Activated T-helper 1 cell treated with anti-CD3 and anti-CD28 coated beads, Interleukin-12 subunit alpha, Interleukin-12 subunit beta, Interleukin-2, Interleukin-4 antibody, amounts not matched to agents 30 ng/mL and 10 ng/mL and 1 ng/mL, durations not matched to agents 14 hours and 24 hours and 36 hours (primary cell): ENCODE measurements at regions of chr22 and their contacts with region 1.

Region 1: GRCh38 chr22:29766632-29767170 is at the start of gene ZMAT5:
- DNase-seq: peak; percentile 90
- H3K4me3 Mint-ChIP-seq: peak within 1 kb of the TSS; percentile 98
- H3K27ac Mint-ChIP-seq: peak within 1 kb of the TSS; percentile 88
- H3K4me1 Mint-ChIP-seq: peaks cover 40% of the 10 kb centered on the region
- H3K27me3 Mint-ChIP-seq: no peaks in the 10 kb centered on the region
- total RNA-seq, gene ZMAT5: 28.4 and 28.5 TPM in 2 replicates

Region 2: GRCh38 chr22:29553351-29554224 is 213.1 kb before region 1 on chr22 and contains the start of gene THOC5:
- intact Hi-C with region 1: loop called (anchors 1 kb)
- DNase-seq: peak; percentile 86
- H3K4me3 Mint-ChIP-seq: peak within 1 kb of the TSS; percentile 93
- H3K27ac Mint-ChIP-seq: peak within 1 kb of the TSS; percentile 94
- H3K4me1 Mint-ChIP-seq: peaks cover 23% of the 10 kb centered on the region
- H3K27me3 Mint-ChIP-seq: no peaks in the 10 kb centered on the region
- total RNA-seq, gene THOC5: 69.0 and 76.2 TPM in 2 replicates

Region 3: GRCh38 chr22:29625090-29625825 is 141.4 kb before region 1 on chr22:
- intact Hi-C with region 1: loop called (anchors 5 kb)
- DNase-seq: peak; percentile 14
- H3K4me3 Mint-ChIP-seq: no peak overlapping the region
- H3K27ac Mint-ChIP-seq: no peak overlapping the region
- H3K4me1 Mint-ChIP-seq: peaks cover 64% of the 10 kb centered on the region
- H3K27me3 Mint-ChIP-seq: no peaks in the 10 kb centered on the region

Region 4: DNA sequence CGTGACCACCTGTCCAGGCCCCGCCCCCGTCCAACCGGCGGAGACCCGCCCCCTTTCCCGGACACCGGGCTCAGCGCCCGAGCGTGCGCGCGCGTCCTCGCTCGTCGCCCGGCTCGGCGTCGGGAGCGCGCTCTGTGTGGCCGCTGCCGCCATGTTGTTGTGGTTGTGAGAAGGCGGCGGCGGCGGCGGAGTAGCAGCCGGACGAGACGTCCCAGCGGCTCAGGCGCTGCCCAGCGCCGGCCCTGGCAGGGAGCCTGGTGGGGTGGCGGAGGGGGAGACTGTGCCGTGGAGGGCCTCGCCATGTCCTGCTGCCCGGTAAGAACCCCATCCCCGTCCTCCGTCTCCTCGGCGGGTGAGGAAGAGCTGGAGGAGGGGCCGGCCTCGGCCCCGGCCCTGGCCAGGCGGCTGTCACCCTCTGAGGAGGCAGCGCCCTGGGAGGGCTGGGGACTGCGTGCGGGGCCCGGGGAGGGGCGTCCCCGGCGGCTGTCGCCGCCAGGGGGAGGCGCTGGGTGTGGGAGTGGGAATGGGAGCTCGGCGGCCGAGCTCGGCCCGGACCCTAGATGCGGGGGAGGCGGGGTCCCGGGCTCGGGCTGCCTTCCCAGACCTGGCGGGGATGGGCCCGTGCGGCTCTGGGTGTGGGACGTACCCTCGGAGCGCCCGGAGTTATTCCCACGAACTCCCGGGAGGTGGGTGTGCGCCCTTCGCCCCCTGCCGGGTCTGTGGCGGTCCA is 116.5 kb after region 1 on chr22 and contains the start of gene MTMR3:
- intact Hi-C with region 1: loop called (anchors 2 kb)
- DNase-seq: peak; percentile 94
- H3K4me3 Mint-ChIP-seq: peak within 1 kb of the TSS; percentile 82
- H3K27ac Mint-ChIP-seq: peak within 1 kb of the TSS; percentile 48
- H3K4me1 Mint-ChIP-seq: peaks cover 7% of the 10 kb centered on the region
- H3K27me3 Mint-ChIP-seq: peaks cover 5% of the 10 kb centered on the region
- total RNA-seq, gene MTMR3: 20.6 and 27.8 TPM in 2 replicates

Region 5: DNA sequence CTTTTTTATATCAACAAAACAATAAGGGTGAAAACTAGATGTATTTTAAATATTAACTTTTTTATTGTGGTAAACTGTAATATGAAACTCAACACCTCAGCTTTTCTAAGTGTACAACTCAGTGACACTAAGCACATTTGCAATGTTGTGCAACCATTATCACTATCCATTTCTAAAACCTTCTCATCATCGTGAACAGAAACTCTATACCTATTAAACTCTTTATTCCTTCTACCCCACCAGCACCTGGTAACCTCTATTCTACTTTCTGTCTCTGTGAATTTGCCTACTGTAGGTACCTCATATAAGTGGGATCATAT is 322.9 kb after region 1 on chr22:
- intact Hi-C with region 1: loop called (anchors 2 kb)
- DNase-seq: no peak
- H3K4me3 Mint-ChIP-seq: no peak overlapping the region
- H3K27ac Mint-ChIP-seq: no peak overlapping the region
- H3K4me1 Mint-ChIP-seq: peaks cover 15% of the 10 kb centered on the region
- H3K27me3 Mint-ChIP-seq: peaks cover 5% of the 10 kb centered on the region

Region 6: GRCh38 chr22:30356449-30357235 is 589.9 kb after region 1 on chr22 and contains the starts of genes CCDC157 and SF3A1:
- intact Hi-C with region 1: loop called (anchors 1 kb)
- DNase-seq: peak; percentile 88
- H3K4me3 Mint-ChIP-seq: peak within 1 kb of the TSS; percentile 94
- H3K27ac Mint-ChIP-seq: peak within 1 kb of the TSS; percentile 90
- H3K4me1 Mint-ChIP-seq: peaks cover 43% of the 10 kb centered on the region
- H3K27me3 Mint-ChIP-seq: peaks cover 8% of the 10 kb centered on the region
- total RNA-seq, gene CCDC157: 2.4 and 3.0 TPM in 2 replicates
- total RNA-seq, gene SF3A1: 308 and 310 TPM in 2 replicates